Mucosa of descending colon (tissue), 3 donors: ENCODE measurements at regions of chr2 and their contacts with region 1.

Region 1: GRCh38 chr2:11234309-11234708 is 79.0 kb downstream of the SLC66A3 start:
- DNase-seq: no peak
- ATAC-seq: no peak
- H3K4me3 ChIP-seq: no peak overlapping the region
- H3K4me1 ChIP-seq: no peaks in the 10 kb centered on the region
- CTCF ChIP-seq: no peak

Region 2: GRCh38 chr2:11344342-11344955 is 110.1 kb after region 1 on chr2 and contains the start of gene ROCK2:
- intact Hi-C with region 1: loop called in 1 of 2 experiments (anchors 10 kb)
- DNase-seq: peak; percentile 89 to 93 (median 91)
- ATAC-seq: peak; percentile 79
- H3K4me3 ChIP-seq: peak within 1 kb of the TSS; percentile 99
- H3K4me1 ChIP-seq: peaks cover 10% of the 10 kb centered on the region
- CTCF ChIP-seq: no peak
- total RNA-seq, gene ROCK2: 67.7 to 77.8 (median 71.0) TPM